Activated CD8-positive, alpha-beta T cell treated with anti-CD3 and anti-CD28 coated beads, Interleukin-2, amount 10 ng/mL, durations not matched to agents 7 days and 5 days (primary cell): ENCODE measurements at regions of chr10 and their contacts with region 1.

Region 1: DNA sequence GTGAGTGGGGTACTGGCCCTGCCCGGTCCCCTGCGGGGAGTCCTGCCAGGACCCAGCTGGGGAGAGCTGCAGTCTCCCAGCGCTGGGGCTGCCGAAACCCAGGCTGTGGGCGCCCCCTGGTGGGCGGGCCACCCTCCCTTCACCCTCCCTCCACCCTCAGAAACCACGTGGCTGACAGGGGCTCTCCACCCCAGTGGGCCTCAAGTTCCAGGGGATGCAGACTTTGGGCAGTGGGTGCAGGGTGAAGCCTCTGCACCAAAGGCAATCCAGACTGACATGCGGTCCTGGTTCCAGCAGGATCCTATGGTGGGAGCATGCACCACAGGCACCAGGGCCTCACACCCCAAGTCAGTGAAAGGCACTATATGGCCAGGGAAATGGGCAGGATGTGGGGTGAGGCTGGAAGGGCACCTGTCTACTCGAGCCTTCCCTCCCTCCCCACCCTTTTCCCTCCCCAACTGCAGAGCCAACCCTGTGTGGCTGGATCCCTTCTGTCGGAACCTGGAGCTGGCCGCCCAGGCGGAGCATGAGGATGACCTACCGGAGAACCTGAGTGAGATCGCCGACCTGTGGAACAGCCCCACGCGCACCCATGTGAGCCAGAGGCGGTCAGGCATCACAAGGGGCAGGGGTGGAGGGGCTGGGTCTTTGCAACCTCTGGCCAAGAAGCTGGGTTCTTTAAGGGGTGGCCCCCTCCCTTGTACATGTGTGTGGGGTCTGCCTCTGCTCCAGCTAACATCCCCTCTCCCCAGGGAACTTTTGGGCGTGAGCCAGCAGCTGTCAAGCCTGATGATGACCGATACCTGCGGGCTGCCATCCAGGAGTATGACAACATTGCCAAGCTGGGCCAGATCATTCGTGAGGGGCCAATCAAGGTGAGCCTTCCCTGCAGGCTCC is 38.8 kb downstream of the PSAP start:
- DNase-seq: peak; percentile 87
- ATAC-seq: peak; percentile 97
- H3K4me3 Mint-ChIP-seq: no peak overlapping the region
- H3K27ac Mint-ChIP-seq: peak overlapping the region; percentile 51
- H3K4me1 Mint-ChIP-seq: peaks cover 21% of the 10 kb centered on the region
- H3K27me3 Mint-ChIP-seq: no peaks in the 10 kb centered on the region

Region 2: DNA sequence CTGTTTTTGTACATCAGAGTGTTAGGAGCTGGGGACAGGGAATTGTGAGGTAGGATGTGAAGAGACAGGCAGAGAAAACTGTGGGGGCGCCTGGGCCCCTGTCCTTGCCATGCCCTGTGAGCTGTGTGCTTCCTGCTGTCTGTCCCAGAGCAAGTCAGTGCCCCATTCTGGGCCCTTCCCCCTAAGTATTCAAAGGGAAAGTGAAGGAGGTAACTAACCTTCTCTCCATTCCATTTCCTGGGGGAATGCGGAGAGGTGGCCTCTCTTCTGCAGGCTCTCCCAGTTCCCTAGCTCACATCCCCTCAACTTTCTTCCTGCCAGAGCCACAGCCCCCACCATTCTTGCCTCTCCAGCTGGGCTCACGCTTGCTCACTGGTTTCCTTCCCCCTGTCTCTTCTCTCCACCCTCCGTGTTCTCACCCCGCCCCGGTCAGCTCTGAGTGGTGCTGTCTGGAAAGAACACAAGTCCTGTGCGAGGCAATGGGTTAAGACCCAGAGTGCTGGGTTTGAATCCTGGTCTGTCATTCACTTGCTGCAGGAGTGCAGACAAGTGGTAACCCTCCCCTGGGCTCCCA is 29.3 kb before region 1 on chr10:
- CTCF ChIA-PET with region 1: interaction called, 10 read pairs
- POLR2A ChIA-PET with region 1: interaction called, 3 read pairs
- DNase-seq: no peak
- ATAC-seq: no peak
- H3K4me3 Mint-ChIP-seq: no peak overlapping the region
- H3K27ac Mint-ChIP-seq: peak overlapping the region; percentile 11
- H3K4me1 Mint-ChIP-seq: peaks cover 46% of the 10 kb centered on the region
- H3K27me3 Mint-ChIP-seq: peaks cover 4% of the 10 kb centered on the region

Region 3: GRCh38 chr10:71822448-71822763 is 10.1 kb after region 1 on chr10:
- CTCF ChIA-PET with region 1: interaction called, 15 read pairs
- POLR2A ChIA-PET with region 1: no interaction called
- DNase-seq: peak; percentile 59
- ATAC-seq: peak; percentile 82
- H3K4me3 Mint-ChIP-seq: no peak overlapping the region
- H3K27ac Mint-ChIP-seq: no peak overlapping the region
- H3K4me1 Mint-ChIP-seq: peaks cover 22% of the 10 kb centered on the region
- H3K27me3 Mint-ChIP-seq: no peaks in the 10 kb centered on the region